Breast epithelium (tissue), 4 donors: ENCODE measurements at regions of chr14 and their contacts with region 1.

Region 1: DNA sequence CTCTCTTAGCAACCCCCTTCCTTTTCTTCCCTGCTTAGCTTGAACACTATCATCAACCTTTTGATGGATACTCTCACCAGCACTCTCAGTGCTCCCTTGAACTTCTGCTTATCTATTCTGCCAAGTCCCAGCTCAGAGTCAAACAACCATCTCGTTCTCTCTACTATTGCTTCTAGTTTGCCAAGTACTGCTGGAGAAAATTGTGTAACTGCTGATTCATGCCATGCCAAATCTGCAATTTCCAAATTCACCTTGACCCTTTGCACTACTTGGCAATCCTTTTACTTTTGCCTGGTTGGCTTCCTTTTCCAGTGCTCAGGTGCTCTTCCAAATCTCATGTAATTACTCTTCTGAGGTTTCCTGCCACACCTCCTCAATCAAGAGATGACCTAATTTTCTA is 2.8 kb upstream of the CCDC196 start:
- DNase-seq: peak in 1 of 2 donors; percentile 21
- H3K4me3 ChIP-seq: no peak overlapping the region
- H3K27ac ChIP-seq: no peak overlapping the region
- H3K4me1 ChIP-seq: no peaks in the 10 kb centered on the region
- H3K27me3 ChIP-seq: no peaks in the 10 kb centered on the region
- CTCF ChIP-seq: no peak
- POLR2A ChIP-seq: no peak

Region 2: DNA sequence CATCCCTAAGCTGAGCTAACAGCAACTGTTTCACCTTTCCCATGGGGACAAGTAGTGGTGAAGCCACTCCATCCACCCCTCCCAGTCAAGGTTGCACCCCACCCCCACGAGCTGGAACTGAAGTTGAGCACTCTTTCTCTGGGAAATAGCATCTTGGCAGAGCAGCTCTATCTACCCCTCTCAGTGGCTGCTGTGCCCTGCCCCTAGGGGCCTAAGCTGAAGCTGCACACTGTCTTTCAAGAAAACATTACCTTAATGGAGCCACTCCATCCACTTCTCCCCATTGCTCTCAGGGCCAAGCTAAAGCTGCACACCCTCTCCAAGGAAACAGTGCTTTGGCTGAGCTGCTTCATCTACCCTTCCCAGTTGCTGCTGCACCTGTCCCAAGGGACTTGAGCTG is 167.8 kb before region 1 on chr14:
- intact Hi-C with region 1: no loop called
- DNase-seq: no peak
- H3K4me3 ChIP-seq: no peak overlapping the region
- H3K27ac ChIP-seq: no peak overlapping the region
- H3K4me1 ChIP-seq: no peaks in the 10 kb centered on the region
- H3K27me3 ChIP-seq: no peaks in the 10 kb centered on the region
- CTCF ChIP-seq: no peak
- POLR2A ChIP-seq: no peak

Region 3: GRCh38 chr14:67111022-67111421 is 627.7 kb after region 1 on chr14:
- intact Hi-C with region 1: loop called (anchors 5 kb)
- DNase-seq: no peak
- H3K4me3 ChIP-seq: no peak overlapping the region
- H3K27ac ChIP-seq: no peak overlapping the region
- H3K4me1 ChIP-seq: no peaks in the 10 kb centered on the region
- H3K27me3 ChIP-seq: no peaks in the 10 kb centered on the region
- CTCF ChIP-seq: no peak
- POLR2A ChIP-seq: no peak